A673 (cell line): ENCODE measurements at regions of chr3 and their contacts with region 1.

Region 1: DNA sequence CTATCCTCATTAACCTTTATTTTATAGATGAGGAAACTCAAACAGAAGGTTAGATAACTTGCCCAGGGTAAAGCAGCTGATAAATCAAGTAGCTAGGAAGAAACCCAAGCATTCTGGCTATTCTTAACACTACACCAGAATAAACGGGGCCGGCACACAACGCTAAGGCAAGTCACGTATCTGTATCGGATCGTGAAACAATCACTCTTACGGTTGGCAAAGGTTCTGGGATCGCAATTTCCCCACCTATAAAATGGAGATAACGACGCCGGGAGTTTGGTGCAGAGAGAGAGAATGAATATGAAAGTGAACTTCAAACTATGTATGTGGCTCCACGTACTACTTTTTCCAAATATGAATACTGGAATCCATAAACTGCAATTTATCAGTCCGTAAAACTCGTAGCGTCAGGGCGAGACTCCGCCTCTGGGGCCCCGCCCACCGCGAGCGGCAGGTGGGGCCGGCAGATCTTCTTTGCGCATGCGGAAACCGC is 252 bp upstream of the ARMC8 start:
- DNase-seq: peak; percentile 92
- H3K4me3 ChIP-seq: peak overlapping the region; percentile 92
- H3K27ac ChIP-seq: peak overlapping the region; percentile 99
- H3K4me1 ChIP-seq: peaks cover 10% of the 10 kb centered on the region
- H3K27me3 ChIP-seq: no peaks in the 10 kb centered on the region
- CTCF ChIP-seq: no peak

Region 2: DNA sequence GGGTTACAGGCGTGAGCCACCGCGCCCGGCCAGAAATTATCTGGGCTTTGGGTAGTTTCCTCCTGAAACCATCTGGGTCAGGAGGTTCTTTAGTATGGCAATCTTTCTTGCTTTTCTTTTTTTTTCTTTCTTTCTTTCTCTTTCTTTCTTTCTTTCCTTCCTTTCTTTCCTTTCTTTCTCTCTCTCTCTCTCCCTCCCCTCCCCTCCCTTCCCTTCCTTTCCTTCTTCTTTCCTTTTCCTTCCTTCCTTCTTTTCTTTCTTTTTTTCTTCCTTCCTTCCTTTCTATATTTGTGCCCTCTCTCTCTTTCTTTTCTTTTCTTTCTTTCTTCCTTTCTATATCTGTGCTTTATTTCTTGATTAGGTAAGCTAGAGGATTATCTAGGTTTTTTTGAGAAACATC is 29.1 kb before region 1 on chr3:
- CTCF ChIA-PET with region 1: no interaction called
- POLR2A ChIA-PET with region 1: interaction called, 23 read pairs
- intact Hi-C with region 1: no loop called
- DNase-seq: no peak
- H3K4me3 ChIP-seq: no peak overlapping the region
- H3K27ac ChIP-seq: no peak overlapping the region
- H3K4me1 ChIP-seq: no peaks in the 10 kb centered on the region
- H3K27me3 ChIP-seq: no peaks in the 10 kb centered on the region
- CTCF ChIP-seq: no peak

Region 3: DNA sequence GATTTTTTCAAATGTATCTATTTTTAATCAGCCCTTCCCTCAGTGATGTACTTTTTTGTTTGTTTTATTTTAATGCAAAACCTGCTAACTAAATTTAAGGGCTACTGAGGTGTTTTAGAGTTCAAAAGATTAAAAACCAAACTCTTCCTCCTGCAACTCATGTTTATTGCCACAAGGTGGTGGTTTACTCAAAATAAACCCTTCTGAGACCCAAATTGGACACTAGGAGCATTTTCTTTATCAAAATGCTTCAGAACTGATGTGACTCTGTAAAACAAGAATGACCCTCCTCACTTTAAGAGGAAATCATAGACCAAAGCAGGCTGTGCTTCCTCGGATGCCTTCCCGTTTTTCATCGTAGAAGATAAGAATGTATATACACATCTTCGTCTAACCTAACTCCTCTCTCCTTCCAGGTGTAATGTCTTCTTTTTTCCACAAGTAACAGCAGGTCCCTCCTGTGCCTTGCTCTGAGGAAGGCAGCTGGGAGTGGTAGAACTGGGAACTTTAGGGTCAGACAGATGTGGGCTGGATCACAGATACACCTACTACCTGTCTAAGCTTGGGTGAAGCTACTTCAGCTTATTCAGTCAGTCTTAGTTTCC is 145.7 kb after region 1 on chr3:
- CTCF ChIA-PET with region 1: no interaction called
- POLR2A ChIA-PET with region 1: no interaction called
- intact Hi-C with region 1: loop called (anchors 5 kb)
- DNase-seq: peak; percentile 44
- H3K4me3 ChIP-seq: no peak overlapping the region
- H3K27ac ChIP-seq: no peak overlapping the region
- H3K4me1 ChIP-seq: peaks cover 6% of the 10 kb centered on the region
- H3K27me3 ChIP-seq: peaks cover 10% of the 10 kb centered on the region
- CTCF ChIP-seq: peak; percentile 59